B cell (primary cell): ENCODE measurements at regions of chr19 and their contacts with region 1.

Region 1: GRCh38 chr19:17390665-17391370 is 3.2 kb downstream of the CCDC194 start:
- DNase-seq: peak; percentile 91
- ATAC-seq: peak; percentile 100
- H3K4me3 ChIP-seq: peak overlapping the region in 4 of 5 experiments; percentile 41 to 69 (median 58)
- H3K4me3 Mint-ChIP-seq: peak overlapping the region; percentile 91
- H3K27ac ChIP-seq: no peak overlapping the region
- H3K27ac Mint-ChIP-seq: peak overlapping the region; percentile 41
- H3K4me1 ChIP-seq: peaks cover 23 to 29% of the 10 kb centered on the region in 2 donors
- H3K4me1 Mint-ChIP-seq: peaks cover 21% of the 10 kb centered on the region
- H3K27me3 ChIP-seq: peaks cover 0 to 22% (median 9%) of the 10 kb centered on the region in 4 experiments
- H3K27me3 Mint-ChIP-seq: no peaks in the 10 kb centered on the region
- CTCF ChIP-seq: peak; percentile 68

Region 2: DNA sequence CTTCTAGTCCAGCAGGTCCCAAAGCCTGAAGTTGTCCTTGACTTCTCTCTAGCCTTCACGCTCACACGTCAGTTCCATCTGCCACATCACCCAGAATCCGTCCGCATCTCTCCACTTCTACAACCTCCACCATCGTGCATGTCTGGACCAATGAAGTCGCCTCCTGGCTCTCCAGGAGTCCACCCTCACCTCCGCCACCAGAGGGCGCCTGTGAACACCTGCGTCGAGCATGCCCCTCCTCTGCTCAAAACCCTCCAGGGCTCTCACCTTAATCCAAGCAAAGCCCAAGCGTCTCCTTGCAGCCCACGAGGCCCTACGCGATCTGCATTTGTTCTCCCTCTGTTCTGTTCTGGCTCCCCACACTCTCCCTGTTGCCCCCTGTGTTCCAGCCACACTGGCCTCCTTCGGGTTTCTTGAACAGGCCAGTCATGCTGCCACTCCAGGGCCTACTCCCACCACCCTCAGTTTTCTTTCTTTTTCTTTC is 129.9 kb before region 1 on chr19:
- CTCF ChIA-PET with region 1: interaction called, 29 read pairs
- POLR2A ChIA-PET with region 1: no interaction called
- intact Hi-C with region 1: loop called (anchors 1 kb)
- DNase-seq: peak; percentile 89
- ATAC-seq: peak; percentile 99
- H3K4me3 ChIP-seq: no peak overlapping the region
- H3K4me3 Mint-ChIP-seq: no peak overlapping the region
- H3K27ac ChIP-seq: no peak overlapping the region
- H3K27ac Mint-ChIP-seq: no peak overlapping the region
- H3K4me1 ChIP-seq: peaks cover 0 to 10% of the 10 kb centered on the region in 2 donors
- H3K4me1 Mint-ChIP-seq: peaks cover 10% of the 10 kb centered on the region
- H3K27me3 ChIP-seq: no peaks in the 10 kb centered on the region
- H3K27me3 Mint-ChIP-seq: no peaks in the 10 kb centered on the region
- CTCF ChIP-seq: peak; percentile 91

Region 3: DNA sequence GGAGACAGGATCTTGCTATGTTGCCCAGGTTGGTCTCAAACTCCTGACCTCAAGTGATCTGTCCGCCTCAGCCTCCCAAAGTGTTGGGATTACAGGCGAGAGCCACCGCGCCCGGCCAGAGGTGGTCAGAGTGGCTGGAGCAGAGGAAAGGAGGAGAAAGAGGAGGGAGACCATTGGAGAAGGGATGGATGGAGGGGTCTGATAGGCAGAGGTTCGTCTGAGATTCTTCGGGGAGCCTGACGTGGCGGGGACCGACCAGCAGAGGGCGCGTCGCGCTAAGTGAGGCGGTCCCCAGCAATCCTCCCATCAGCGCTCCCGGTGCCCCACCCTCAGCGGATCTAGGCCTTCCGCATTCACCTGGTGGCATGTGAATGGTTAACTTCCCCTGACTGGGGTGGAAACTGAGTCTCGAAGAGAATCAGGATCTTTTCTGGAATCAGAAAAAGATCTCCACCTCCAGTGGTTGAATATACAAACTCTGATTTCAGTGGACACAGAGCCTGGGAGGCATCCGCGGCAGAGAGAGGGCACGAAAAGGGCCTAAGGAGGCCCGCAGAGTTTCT is 44.6 kb before region 1 on chr19:
- CTCF ChIA-PET with region 1: interaction called, 109 read pairs
- POLR2A ChIA-PET with region 1: interaction called, 3 read pairs
- intact Hi-C with region 1: loop called (anchors 1 kb)
- DNase-seq: peak; percentile 84
- ATAC-seq: peak; percentile 98
- H3K4me3 ChIP-seq: no peak overlapping the region
- H3K4me3 Mint-ChIP-seq: no peak overlapping the region
- H3K27ac ChIP-seq: no peak overlapping the region
- H3K27ac Mint-ChIP-seq: no peak overlapping the region
- H3K4me1 ChIP-seq: peaks cover 5 to 6% of the 10 kb centered on the region in 2 donors
- H3K4me1 Mint-ChIP-seq: peaks cover 6% of the 10 kb centered on the region
- H3K27me3 ChIP-seq: peaks cover 0 to 32% (median 12%) of the 10 kb centered on the region in 4 experiments
- H3K27me3 Mint-ChIP-seq: peaks cover 26% of the 10 kb centered on the region
- CTCF ChIP-seq: peak; percentile 93

Region 4: DNA sequence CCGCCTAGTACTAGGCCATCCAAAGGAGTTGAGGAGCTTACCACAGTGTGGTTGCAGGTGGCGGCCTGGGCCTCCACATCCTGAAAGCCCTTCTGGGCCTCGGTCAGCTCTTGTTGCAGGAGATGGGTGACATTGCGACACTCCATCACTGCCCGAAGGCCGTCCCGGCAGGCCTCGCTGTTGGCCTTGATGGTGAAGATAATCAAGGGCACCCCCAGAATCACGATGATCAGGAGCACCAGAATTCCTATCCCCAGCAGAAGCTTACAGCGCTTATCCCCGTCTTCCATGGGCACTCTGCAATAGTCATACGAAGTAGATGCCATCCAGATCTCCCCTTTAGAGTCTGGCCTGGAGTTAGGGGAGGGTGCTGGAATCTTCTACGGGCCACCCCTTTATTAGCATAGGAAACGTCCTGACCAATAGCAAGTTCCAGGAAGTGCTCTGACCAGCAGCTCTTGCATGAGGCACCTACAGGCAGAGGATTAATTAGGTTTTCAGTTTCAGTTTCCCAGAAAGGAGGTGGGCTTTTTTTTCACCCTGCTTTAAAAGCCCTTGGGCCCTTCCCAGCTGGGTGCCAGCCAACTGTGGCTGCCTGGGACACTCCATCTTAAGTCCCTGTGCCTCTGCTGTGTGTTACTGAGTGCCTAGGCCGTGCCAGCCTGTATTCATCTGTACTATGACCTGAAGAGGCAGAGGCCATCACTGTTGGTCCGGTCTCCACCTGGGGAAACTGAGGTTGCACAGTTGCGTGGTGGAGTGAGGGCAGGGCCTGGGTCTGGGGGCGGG is 14.6 kb after region 1 on chr19 and contains the start of gene BST2:
- CTCF ChIA-PET with region 1: interaction called, 10 read pairs
- POLR2A ChIA-PET with region 1: interaction called, 4 read pairs
- intact Hi-C with region 1: loop called (anchors 1 kb)
- DNase-seq: peak; percentile 81
- ATAC-seq: peak; percentile 91
- H3K4me3 ChIP-seq: peak within 1 kb of the TSS; percentile 62 to 95 (median 75)
- H3K4me3 Mint-ChIP-seq: peak within 1 kb of the TSS; percentile 85
- H3K27ac ChIP-seq: peak within 1 kb of the TSS; percentile 72 to 86
- H3K27ac Mint-ChIP-seq: peak within 1 kb of the TSS; percentile 86
- H3K4me1 ChIP-seq: peaks cover 26 to 45% of the 10 kb centered on the region in 2 donors
- H3K4me1 Mint-ChIP-seq: peaks cover 42% of the 10 kb centered on the region
- H3K27me3 ChIP-seq: no peaks in the 10 kb centered on the region
- H3K27me3 Mint-ChIP-seq: no peaks in the 10 kb centered on the region
- CTCF ChIP-seq: no peak
- total RNA-seq, gene BST2: 59.7 and 66.0 TPM in 2 replicates

Region 5: DNA sequence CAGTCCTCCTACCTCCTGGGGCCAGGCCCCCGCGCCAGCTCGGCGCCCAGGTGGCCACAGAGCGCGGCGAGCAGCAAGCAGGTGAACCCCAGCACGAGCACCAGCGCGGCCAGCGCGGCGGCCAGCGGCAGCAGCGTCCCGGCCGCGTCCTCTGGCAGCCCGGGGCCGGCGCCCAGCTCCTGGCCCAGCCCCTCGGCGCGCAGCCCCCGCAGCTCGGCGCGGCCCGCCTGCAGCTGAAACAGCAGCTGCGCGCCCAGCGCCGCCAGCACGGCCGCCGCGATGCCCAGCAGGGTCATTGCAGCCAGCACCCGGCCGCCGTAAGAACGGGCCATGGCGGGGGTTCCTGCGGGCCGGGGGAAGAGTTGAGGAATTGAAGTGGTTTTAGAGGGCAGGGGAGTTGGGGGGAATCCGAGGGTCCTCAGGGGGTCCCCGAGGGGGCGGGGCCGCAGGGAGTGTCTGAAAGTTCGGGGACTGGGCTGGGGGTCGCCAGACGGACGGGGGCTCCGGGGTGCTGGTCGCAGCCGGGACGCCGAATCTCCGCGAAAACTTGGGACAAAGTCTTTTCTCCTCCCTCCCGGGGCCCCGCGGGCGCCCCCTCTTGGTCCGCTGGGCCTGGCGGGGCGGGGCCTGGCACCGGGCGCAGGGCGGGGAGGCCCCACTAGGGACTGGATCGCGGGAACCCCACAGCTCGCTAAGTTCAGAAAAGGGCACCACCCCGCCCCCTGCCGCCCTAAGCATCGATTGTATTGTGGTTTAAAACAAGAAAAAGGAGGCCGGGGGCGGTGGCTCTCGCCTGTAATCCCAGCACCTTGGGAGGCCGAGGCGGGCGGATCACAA is 57.5 kb after region 1 on chr19 and contains the start of gene TMEM221:
- CTCF ChIA-PET with region 1: interaction called, 3 read pairs
- POLR2A ChIA-PET with region 1: interaction called, 12 read pairs
- intact Hi-C with region 1: no loop called
- DNase-seq: peak; percentile 73
- ATAC-seq: peak; percentile 86
- H3K4me3 ChIP-seq: peak within 1 kb of the TSS in 3 of 5 experiments; percentile 3 to 29 (median 15)
- H3K4me3 Mint-ChIP-seq: peak within 1 kb of the TSS; percentile 48
- H3K27ac ChIP-seq: no peak within 1 kb of the TSS
- H3K27ac Mint-ChIP-seq: no peak within 1 kb of the TSS
- H3K4me1 ChIP-seq: peaks cover 6 to 12% of the 10 kb centered on the region in 2 donors
- H3K4me1 Mint-ChIP-seq: peaks cover 13% of the 10 kb centered on the region
- H3K27me3 ChIP-seq: peaks cover 0 to 53% (median 15%) of the 10 kb centered on the region in 4 experiments
- H3K27me3 Mint-ChIP-seq: peaks cover 28% of the 10 kb centered on the region
- CTCF ChIP-seq: peak; percentile 68
- total RNA-seq, gene TMEM221: not detected in 2 replicates

Region 6: GRCh38 chr19:17599780-17600179 is 209.0 kb after region 1 on chr19:
- CTCF ChIA-PET with region 1: no interaction called
- POLR2A ChIA-PET with region 1: no interaction called
- intact Hi-C with region 1: no loop called
- DNase-seq: no peak
- ATAC-seq: no peak
- H3K4me3 ChIP-seq: no peak overlapping the region
- H3K4me3 Mint-ChIP-seq: no peak overlapping the region
- H3K27ac ChIP-seq: no peak overlapping the region
- H3K27ac Mint-ChIP-seq: no peak overlapping the region
- H3K4me1 ChIP-seq: no peaks in the 10 kb centered on the region
- H3K4me1 Mint-ChIP-seq: peaks cover 12% of the 10 kb centered on the region
- H3K27me3 ChIP-seq: peaks cover 0 to 34% (median 8%) of the 10 kb centered on the region in 4 experiments
- H3K27me3 Mint-ChIP-seq: peaks cover 39% of the 10 kb centered on the region
- CTCF ChIP-seq: no peak